ENCODE measurements at regions of chr9 and their contacts with region 1.

Region 1: DNA sequence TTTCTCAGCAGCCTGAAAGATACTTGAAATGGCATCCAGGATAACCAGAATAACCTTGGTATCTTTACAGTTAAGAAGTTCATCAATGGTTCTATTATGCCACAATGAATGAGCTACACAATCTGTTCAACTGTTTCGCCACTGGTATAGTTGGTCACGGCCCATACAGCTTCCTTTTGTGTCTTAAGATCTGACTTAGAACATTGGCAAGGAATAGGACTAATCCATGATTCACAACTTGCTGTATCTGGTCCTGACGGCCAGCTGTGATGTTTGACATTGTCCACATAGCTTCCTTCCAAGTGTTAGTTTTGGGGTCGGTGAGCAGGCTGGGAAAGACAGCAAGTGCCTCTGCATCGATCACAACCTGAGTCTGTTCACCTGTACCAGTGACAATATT is 113.3 kb upstream of the RAD23B start:
- H3K4me3 ChIP-seq: no peak overlapping the region
- H3K27ac ChIP-seq: no peak overlapping the region
- H3K4me1 ChIP-seq: no peaks in the 10 kb centered on the region
- CTCF ChIP-seq: no peak

Region 2: GRCh38 chr9:107158321-107158720 is 11.5 kb before region 1 on chr9:
- CTCF ChIA-PET with region 1: interaction called, 21 read pairs
- POLR2A ChIA-PET with region 1: no interaction called
- H3K4me3 ChIP-seq: no peak overlapping the region
- H3K27ac ChIP-seq: no peak overlapping the region
- H3K4me1 ChIP-seq: no peaks in the 10 kb centered on the region
- CTCF ChIP-seq: no peak

Region 3: GRCh38 chr9:107421947-107422793 is 252.4 kb after region 1 on chr9:
- CTCF ChIA-PET with region 1: no interaction called
- POLR2A ChIA-PET with region 1: no interaction called
- H3K4me3 ChIP-seq: no peak overlapping the region
- H3K27ac ChIP-seq: no peak overlapping the region
- H3K4me1 ChIP-seq: 0 out of 2 replicates have a peak, but pooled peaks cover 2% of the 10 kb centered on the region
- CTCF ChIP-seq: peak; percentile 72

Region 4: GRCh38 chr9:107548048-107548800 is 378.4 kb after region 1 on chr9:
- CTCF ChIA-PET with region 1: no interaction called
- POLR2A ChIA-PET with region 1: no interaction called
- H3K4me3 ChIP-seq: no peak overlapping the region
- H3K27ac ChIP-seq: no peak overlapping the region; the same call in 1 of the 2 replicates
- H3K4me1 ChIP-seq: no peaks in the 10 kb centered on the region
- CTCF ChIP-seq: no peak